Heart right ventricle (tissue), 16 donors: ENCODE measurements at regions of chr6 and their contacts with region 1.

Region 1: DNA sequence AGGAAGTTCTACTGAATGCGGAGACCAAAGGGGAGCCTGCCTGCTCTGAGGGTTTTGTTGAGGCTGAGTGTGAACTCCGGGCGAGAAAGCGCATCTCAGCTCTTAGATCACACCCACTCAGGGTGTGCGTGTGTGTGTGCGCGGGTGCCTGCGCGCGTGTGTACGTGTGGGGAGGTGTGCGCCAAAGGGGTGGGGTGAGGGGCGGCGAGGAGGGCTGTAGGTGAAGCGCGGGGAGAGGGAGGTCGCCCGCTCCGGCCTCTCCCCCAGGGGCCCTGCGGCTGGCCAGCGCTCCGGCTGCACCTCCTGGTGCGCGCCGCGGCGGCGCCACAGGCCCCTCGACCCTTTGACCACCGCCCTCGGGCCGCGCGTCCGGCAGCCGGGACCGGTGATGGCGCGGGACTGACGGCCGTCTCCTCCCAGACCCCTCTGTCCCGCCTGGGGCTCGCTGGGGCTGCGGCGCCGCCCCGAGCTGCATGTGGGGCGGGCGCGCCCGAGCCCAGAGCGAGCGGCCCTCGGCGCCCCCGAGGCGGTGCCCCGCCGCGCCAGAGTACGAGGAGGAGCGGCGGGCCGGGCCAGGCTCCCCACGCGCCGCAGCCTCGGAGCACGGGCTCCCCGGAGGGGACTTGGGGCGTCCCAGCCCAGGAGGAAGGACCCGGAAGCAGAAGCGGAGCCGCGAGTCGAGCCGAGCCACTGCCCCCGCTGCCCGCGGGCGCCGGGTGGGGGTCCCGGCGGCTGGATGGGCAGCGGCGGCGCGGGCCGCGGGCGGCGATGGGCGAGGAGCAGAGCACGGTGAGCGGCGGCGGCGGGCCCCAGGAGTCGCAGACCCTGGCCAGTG is at the start of gene RNF217:
- DNase-seq: peak; percentile 62 to 71
- ATAC-seq: peak; percentile 68 to 92 (median 78)
- H3K4me3 ChIP-seq: peak within 1 kb of the TSS; percentile 71 to 91 (median 83)
- H3K27ac ChIP-seq: peak within 1 kb of the TSS; percentile 83 to 96 (median 93)
- H3K4me1 ChIP-seq: peaks cover 0 to 42% (median 37%) of the 10 kb centered on the region in 9 donors
- H3K27me3 ChIP-seq: no peaks in the 10 kb centered on the region
- CTCF ChIP-seq: peak in 5 of 9 donors; percentile 8 to 33 (median 13)
- total RNA-seq, gene RNF217: 8.4 to 26.9 (median 14.9) TPM

Region 2: DNA sequence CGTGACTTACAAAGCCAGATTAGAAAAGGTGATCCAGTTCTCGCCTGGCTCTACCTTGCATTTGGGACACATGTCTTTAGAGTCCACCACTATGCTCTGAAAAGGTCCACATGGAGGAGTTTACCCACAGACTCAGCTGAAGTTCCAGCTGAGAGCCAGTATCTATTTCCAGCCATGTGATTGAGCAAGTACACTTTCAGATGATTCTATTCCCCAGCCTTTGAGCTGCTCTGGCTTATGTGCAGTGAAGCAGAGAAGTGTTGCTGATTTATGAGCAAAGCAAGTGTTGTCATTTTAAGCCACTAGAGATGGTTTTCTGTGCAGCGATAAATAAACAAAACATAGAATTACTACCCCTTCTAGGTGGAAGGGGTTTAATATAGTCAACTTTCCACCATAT is 520.5 kb before region 1 on chr6:
- intact Hi-C with region 1: no loop called
- DNase-seq: no peak
- ATAC-seq: no peak
- H3K4me3 ChIP-seq: no peak overlapping the region
- H3K27ac ChIP-seq: no peak overlapping the region
- H3K4me1 ChIP-seq: no peaks in the 10 kb centered on the region
- H3K27me3 ChIP-seq: no peaks in the 10 kb centered on the region
- CTCF ChIP-seq: no peak

Region 3: GRCh38 chr6:124703541-124703940 is 258.5 kb before region 1 on chr6:
- intact Hi-C with region 1: no loop called
- DNase-seq: no peak
- ATAC-seq: no peak
- H3K4me3 ChIP-seq: no peak overlapping the region
- H3K27ac ChIP-seq: no peak overlapping the region
- H3K4me1 ChIP-seq: no peaks in the 10 kb centered on the region
- H3K27me3 ChIP-seq: no peaks in the 10 kb centered on the region
- CTCF ChIP-seq: no peak

Region 4: DNA sequence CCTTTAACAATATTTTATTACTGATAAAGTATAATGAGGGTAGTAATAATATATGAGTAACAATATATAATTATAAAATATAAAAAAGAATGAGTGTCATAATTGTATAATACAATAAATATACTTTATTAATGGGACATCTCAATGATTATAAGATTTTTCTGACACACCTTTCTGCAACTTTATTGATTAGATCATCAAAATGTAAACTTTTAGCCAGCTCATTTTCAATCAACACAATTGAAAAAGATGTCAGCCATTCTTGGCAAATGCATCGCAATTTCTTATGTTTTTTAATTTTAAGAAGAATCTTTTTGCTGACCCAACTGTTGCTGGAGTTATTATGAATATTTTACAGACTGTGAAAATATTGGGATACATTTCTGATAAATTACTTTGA is 132.2 kb before region 1 on chr6:
- intact Hi-C with region 1: no loop called
- DNase-seq: no peak
- ATAC-seq: no peak
- H3K4me3 ChIP-seq: no peak overlapping the region
- H3K27ac ChIP-seq: no peak overlapping the region
- H3K4me1 ChIP-seq: no peaks in the 10 kb centered on the region
- H3K27me3 ChIP-seq: no peaks in the 10 kb centered on the region
- CTCF ChIP-seq: no peak

Region 5: DNA sequence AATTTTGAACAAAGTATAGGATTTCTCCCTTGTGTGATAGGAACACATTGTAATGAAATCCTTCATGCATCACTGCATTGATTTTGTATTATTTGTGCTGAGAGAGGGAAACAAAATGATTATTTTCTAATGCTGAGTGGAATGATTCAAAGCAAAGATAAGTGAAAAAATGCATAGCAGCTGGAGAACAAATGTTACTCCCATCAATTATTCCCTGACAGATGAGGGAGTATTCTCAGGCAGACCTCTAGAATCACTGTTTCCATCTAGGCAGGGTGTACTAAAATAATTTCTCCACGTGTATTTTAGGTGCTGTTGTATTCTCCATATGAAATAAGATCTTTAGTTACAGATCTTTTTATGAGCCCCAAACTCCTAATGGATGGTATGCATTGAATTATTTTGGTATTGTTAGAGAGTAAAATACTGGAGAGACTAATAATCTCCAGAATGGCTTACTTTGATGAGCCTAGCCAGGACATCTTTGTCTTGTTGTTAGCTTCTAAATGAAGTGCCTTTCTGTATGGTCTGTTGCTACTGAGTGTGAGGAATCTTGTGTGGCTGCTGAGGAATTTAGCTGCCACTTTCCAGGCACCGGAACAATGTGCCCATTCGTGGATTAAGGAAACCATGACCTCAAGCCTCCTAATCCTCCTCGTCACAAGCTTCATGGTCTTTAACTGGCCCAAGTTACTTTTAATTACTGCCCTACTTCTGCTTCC is 39.9 kb after region 1 on chr6:
- intact Hi-C with region 1: loop called in 1 of 10 experiments (anchors 5 kb)
- DNase-seq: no peak
- ATAC-seq: peak in 7 of 8 donors; percentile 17 to 70 (median 58)
- H3K4me3 ChIP-seq: peak overlapping the region in 9 of 10 donors; percentile 4 to 52 (median 44)
- H3K27ac ChIP-seq: peak overlapping the region in 5 of 10 donors; percentile 11 to 28 (median 25)
- H3K4me1 ChIP-seq: peaks cover 0 to 42% (median 16%) of the 10 kb centered on the region in 9 donors
- H3K27me3 ChIP-seq: no peaks in the 10 kb centered on the region
- CTCF ChIP-seq: no peak

Region 6: DNA sequence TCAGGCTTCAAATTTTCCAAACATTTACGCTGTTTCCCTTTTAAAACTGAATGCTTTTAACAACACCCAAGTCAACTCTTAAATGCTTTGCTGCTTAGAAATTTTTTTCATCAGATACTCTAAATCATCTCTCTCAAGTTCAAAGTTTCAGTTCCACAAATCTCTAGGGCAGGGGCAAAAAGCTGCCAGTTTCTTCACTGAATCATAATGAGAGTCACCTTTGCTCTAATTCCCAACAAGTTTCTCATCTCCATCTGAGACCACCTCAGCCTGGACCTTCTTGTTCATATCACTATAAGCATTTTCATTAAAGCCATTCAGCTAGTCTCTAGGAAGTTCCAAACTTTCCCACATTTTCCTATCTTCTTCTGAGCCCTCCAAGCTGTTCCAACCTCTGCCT is 69.4 kb after region 1 on chr6:
- intact Hi-C with region 1: no loop called
- DNase-seq: no peak
- ATAC-seq: no peak
- H3K4me3 ChIP-seq: no peak overlapping the region
- H3K27ac ChIP-seq: no peak overlapping the region
- H3K4me1 ChIP-seq: no peaks in the 10 kb centered on the region
- H3K27me3 ChIP-seq: no peaks in the 10 kb centered on the region
- CTCF ChIP-seq: no peak

Region 7: DNA sequence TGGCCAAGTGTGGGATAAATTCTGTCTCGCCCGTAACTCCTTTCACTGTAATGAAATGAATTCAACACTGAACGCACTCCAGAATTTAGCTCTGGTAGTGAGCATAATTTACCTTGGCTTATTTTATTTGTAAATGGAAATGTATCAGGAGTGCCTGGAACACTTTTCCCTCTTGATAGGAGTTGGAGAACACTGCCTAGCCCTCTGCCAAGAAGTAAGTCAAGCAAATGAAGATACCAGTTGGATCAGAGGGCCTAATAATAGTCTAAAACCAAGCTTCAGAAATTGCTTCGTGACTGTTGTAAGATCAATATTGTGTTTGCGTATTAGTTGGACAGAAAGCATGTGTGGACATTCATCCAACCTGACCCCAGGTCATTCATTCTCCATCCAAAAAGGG is 127.0 kb after region 1 on chr6:
- intact Hi-C with region 1: loop called in 3 of 10 experiments (anchors 5 to 10 kb)
- DNase-seq: no peak
- ATAC-seq: peak in 5 of 8 donors; percentile 53 to 83 (median 66)
- H3K4me3 ChIP-seq: no peak overlapping the region
- H3K27ac ChIP-seq: peak overlapping the region in 4 of 10 donors; percentile 31 to 58 (median 38)
- H3K4me1 ChIP-seq: no peaks in the 10 kb centered on the region
- H3K27me3 ChIP-seq: no peaks in the 10 kb centered on the region
- CTCF ChIP-seq: no peak

Region 8: DNA sequence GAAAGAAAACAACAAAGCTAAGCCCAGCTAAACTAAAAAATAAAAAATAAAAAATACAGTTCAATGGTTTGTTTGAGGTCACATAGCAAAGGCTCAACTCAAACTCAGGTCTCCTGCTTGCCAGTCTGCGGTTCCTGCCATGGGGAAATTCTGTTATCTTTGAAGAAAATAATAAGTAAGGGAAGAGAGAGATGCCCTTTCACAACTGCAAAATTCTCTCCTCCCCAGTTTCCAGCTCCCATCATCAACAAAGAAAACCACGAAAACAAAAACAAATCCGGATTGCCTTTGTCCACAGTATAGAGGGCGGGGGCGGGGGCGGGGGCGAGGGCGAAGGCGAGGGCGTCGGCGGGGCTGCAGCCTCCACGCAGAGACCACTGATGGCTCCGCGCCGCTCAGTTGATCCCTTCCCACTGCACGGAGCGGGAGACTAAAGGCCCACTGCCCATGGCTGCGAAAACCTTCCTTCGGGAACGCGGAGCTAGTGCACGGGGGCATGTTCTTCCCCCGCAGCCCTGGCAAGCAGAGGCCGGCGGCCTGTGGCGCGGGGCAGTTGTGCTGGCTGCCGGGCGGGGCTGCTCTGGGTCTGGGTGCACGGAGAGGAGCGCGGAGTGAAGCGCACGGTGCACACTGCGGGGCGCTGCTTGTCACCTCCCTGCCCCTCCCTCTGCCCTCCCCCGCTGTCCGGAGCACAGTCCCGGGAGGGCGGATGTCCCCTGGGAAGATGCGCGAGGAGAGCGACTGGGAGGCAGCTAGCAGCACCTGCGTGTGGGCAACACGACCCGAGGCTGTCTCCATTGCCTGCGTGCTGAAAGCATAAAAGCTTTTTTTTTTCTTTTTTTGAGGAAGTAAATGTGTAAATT is 137.4 kb after region 1 on chr6:
- intact Hi-C with region 1: loop called in 7 of 10 experiments (anchors 5 to 10 kb)
- DNase-seq: peak; percentile 58 to 62
- ATAC-seq: peak; percentile 76 to 96 (median 92)
- H3K4me3 ChIP-seq: peak overlapping the region in 9 of 10 donors; percentile 33 to 73 (median 60)
- H3K27ac ChIP-seq: peak overlapping the region in 2 of 10 donors; percentile 25 to 63
- H3K4me1 ChIP-seq: peaks cover 0 to 29% (median 17%) of the 10 kb centered on the region in 9 donors
- H3K27me3 ChIP-seq: peaks cover 0 to 3% (median 0%) of the 10 kb centered on the region in 7 donors
- CTCF ChIP-seq: peak in 2 of 9 donors; percentile 18 to 22

Region 9: DNA sequence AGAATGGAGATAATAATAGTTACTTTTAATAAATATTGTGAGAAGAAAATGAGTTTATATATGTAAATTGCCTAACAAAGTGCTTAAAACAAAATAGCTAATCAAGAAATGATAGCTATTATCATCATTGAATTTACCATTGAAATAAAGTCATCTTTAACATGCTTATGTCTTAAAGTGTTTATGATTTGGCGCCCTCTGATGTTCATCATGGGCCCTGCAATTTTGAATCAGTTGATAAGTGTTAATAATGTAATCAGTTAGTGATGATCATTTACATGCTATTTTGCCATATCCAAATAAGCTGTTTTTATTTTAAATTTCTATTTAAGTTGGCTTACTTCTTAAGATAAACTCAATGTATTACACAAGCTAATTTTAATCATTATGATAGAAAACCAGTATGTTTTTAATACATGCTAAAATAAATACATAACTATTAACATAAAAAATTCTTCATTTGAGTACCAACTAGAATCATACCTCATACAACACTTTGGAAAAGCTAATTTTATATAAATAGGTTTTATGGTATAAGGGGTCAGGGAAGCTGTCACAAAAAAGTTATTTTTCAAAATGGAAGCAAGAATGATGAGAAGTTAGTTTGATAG is 152.4 kb after region 1 on chr6:
- intact Hi-C with region 1: loop called in 4 of 10 experiments (anchors 1 to 10 kb)
- DNase-seq: peak in 1 of 2 donors; percentile 53
- ATAC-seq: no peak
- H3K4me3 ChIP-seq: no peak overlapping the region
- H3K27ac ChIP-seq: no peak overlapping the region
- H3K4me1 ChIP-seq: no peaks in the 10 kb centered on the region
- H3K27me3 ChIP-seq: no peaks in the 10 kb centered on the region
- CTCF ChIP-seq: peak; percentile 77 to 97 (median 89)

Region 10: GRCh38 chr6:125207956-125208355 is 246.0 kb after region 1 on chr6:
- intact Hi-C with region 1: loop called in 1 of 10 experiments (anchors 5 kb)
- DNase-seq: no peak
- ATAC-seq: no peak
- H3K4me3 ChIP-seq: no peak overlapping the region
- H3K27ac ChIP-seq: peak overlapping the region in 3 of 10 donors; percentile 3 to 79 (median 54)
- H3K4me1 ChIP-seq: peaks cover 0 to 49% (median 12%) of the 10 kb centered on the region in 9 donors
- H3K27me3 ChIP-seq: no peaks in the 10 kb centered on the region
- CTCF ChIP-seq: no peak